CD4-positive, alpha-beta memory T cell (primary cell): ENCODE measurements at regions of chr16 and their contacts with region 1.

Region 1: DNA sequence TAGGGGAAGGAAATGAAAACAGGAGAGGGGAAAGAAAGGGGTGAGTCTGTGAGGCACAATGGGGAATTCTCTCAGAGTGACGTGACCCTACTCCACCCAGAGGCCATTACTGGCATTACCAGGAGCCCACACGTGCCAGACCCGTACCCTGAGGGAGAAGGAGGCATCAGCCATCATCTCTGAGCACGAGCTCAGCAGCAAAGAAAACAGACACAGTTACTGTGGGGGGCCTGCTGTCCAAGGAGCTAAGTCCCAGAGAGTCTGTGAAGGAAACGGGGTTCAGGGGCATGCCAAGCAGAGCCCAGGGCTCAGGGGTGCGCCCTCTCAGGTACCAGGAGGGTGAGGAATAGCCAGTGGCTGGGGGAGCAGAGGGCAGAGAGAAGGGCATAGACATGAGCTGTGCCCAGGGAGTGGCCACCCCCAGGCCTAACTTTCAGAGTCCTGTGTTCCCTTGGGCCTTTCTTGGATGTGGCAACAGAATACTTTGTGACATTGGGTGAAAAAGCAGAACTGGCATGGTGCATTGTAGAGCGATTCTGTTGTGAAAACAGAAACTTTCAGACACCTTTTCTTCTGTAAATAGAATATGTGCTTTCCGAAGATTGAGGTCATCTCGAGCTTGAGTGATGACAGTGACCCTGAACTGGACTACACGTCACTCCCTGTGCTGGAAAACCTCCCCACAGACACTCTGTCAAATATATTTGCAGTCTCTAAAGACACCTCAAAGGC is 11.3 kb downstream of the TAF1C start:
- DNase-seq: peak; percentile 35 to 59 (median 45)
- H3K4me3 ChIP-seq: no peak overlapping the region
- H3K4me3 Mint-ChIP-seq: no peak overlapping the region
- H3K27ac ChIP-seq: no peak overlapping the region
- H3K27ac Mint-ChIP-seq: peak overlapping the region in 2 of 7 donors; percentile 9 to 59
- H3K4me1 ChIP-seq: no peaks in the 10 kb centered on the region
- H3K4me1 Mint-ChIP-seq: peaks cover 0 to 6% (median 5%) of the 10 kb centered on the region in 4 donors
- H3K27me3 ChIP-seq: no peaks in the 10 kb centered on the region
- H3K27me3 Mint-ChIP-seq: peaks cover 0 to 2% of the 10 kb centered on the region in 2 donors

Region 2: GRCh38 chr16:83956336-83957289 is 218.9 kb before region 1 on chr16:
- CTCF ChIA-PET with region 1: interaction called, 5 read pairs
- POLR2A ChIA-PET with region 1: no interaction called
- intact Hi-C with region 1: loop called (anchors 1 kb)
- DNase-seq: peak; percentile 46 to 61 (median 57)
- H3K4me3 ChIP-seq: no peak overlapping the region
- H3K4me3 Mint-ChIP-seq: no peak overlapping the region
- H3K27ac ChIP-seq: no peak overlapping the region
- H3K27ac Mint-ChIP-seq: no peak overlapping the region
- H3K4me1 ChIP-seq: peaks cover 10% of the 10 kb centered on the region
- H3K4me1 Mint-ChIP-seq: peaks cover 0 to 8% (median 4%) of the 10 kb centered on the region in 4 donors
- H3K27me3 ChIP-seq: no peaks in the 10 kb centered on the region
- H3K27me3 Mint-ChIP-seq: peaks cover 10 to 15% of the 10 kb centered on the region in 2 donors